ENCODE measurements at regions of chr12 and their contacts with region 1.

Region 1: GRCh38 chr12:49130151-49131050 is 794 bp downstream of the TUBA1B start:
- DNase-seq: peak; percentile 90
- H3K4me3 ChIP-seq: peak overlapping the region; percentile 73 to 80 (median 76)
- H3K27ac ChIP-seq: peak overlapping the region; percentile 94
- H3K4me1 ChIP-seq: peaks cover 24% of the 10 kb centered on the region
- H3K27me3 ChIP-seq: no peaks in the 10 kb centered on the region
- CTCF ChIP-seq: peak; percentile 86 to 94

Region 2: GRCh38 chr12:48758221-48758620 is 372.2 kb before region 1 on chr12:
- CTCF ChIA-PET with region 1: no interaction called
- dilution Hi-C with region 1: no loop called
- in situ Hi-C with region 1: no loop called
- intact Hi-C with region 1: no loop called
- DNase-seq: no peak
- H3K4me3 ChIP-seq: no peak overlapping the region
- H3K27ac ChIP-seq: no peak overlapping the region
- H3K4me1 ChIP-seq: no peaks in the 10 kb centered on the region
- H3K27me3 ChIP-seq: no peaks in the 10 kb centered on the region
- CTCF ChIP-seq: no peak

Region 3: GRCh38 chr12:48903982-48904411 is 226.4 kb before region 1 on chr12:
- CTCF ChIA-PET with region 1: no interaction called
- dilution Hi-C with region 1: no loop called
- in situ Hi-C with region 1: no loop called
- intact Hi-C with region 1: no loop called
- DNase-seq: peak; percentile 51
- H3K4me3 ChIP-seq: peak overlapping the region; percentile 34 to 43 (median 34)
- H3K27ac ChIP-seq: no peak overlapping the region
- H3K4me1 ChIP-seq: no peaks in the 10 kb centered on the region
- H3K27me3 ChIP-seq: no peaks in the 10 kb centered on the region
- CTCF ChIP-seq: peak; percentile 47 to 59

Region 4: DNA sequence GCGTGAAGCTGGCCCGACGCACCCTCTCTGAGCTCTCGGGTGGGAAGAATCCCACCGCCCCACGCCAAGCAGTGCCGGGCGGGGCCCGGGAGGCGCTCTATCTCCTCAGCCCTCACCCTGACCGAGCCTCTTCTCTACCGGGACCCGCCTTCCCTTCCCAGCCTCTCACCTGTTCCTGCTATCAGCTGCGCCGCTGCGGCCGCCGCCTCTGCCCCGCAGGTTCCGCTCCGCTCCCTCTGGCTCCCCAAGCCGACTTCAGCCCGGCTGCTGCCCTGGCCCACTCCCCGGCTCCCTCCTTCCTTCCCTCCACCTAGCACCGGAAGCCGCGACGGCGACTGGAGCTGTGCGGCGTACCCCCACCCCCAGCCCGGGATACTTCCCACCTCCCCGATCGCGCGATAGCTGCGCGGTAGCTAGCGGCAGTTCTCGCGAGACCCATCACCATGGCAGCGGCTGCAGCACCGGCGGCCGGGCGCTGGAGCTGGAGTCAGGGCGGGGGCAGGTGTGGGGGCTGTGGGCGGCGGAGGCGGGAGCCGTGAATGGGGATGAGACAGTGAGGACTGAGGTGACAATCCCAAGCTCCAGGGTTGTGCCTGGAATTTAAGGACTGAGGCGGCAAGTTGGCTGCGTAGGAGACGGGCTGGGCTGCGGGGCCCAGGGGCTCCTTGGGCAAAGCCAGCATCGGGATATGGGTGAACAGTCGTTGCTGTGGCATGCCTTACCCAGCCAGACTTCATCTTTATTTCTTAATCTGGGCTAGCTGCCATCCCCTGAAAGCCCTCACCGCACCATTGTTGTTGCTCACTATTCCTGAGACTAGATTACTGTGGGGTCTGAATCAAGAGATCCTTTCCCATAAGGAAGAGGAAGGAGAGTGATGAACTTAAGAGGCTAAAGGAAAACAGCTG is 173.0 kb before region 1 on chr12 and contains the start of gene ARF3:
- CTCF ChIA-PET with region 1: interaction called, 3 read pairs
- dilution Hi-C with region 1: no loop called
- in situ Hi-C with region 1: no loop called
- intact Hi-C with region 1: loop called (anchors 5 kb)
- DNase-seq: peak; percentile 88
- H3K4me3 ChIP-seq: peak within 1 kb of the TSS; percentile 82 to 97 (median 96)
- H3K27ac ChIP-seq: peak within 1 kb of the TSS; percentile 78
- H3K4me1 ChIP-seq: peaks cover 28% of the 10 kb centered on the region
- H3K27me3 ChIP-seq: no peaks in the 10 kb centered on the region
- CTCF ChIP-seq: no peak
- total RNA-seq, gene ARF3: 87.9 to 201 TPM

Region 5: DNA sequence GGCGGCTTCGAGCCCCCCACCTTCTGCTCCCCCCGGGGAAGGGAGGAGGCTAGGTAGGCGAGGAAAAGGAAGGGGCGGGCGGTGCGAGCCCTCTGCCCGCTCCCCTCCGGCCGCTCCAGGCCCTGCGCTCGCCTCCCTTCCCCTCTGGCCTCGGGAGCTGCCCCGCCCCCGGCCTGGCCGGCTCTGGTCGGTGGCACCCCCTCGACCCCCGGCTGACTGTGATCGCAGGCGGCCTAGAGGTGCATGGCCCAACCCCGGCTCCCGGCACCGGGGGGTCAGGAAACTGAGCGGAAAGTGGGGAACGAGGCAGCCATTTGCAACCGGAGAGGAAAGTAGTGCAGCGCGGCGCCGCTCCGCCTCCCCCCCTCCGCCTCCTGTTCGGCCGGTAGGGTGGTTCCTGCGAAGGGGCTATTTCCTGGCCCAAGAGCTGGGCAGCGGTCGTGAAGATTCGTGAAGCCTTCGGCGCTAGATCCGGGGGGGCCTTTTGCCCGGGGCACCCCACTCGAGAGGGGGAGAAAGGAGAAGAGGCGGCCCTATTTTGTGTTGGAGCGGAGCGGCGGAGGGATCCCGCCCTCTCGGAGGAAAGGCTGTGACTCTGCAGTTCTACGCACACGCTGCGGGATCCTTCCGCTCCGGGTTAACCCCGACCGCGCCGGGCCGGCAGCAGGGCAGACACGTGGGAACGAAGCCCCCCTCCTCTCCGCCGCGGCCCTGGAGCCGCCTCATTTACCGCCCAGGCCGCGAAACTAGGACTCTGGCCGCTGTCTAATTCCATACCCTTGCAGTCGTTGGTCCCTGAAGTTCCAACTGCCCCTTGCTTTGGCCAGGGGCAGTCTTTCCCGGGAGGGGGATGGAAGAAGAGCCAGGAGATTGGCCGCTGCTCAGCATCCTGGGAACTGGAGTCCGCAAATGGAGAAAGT is 69.9 kb before region 1 on chr12 and contains the start of gene KMT2D:
- CTCF ChIA-PET with region 1: no interaction called
- dilution Hi-C with region 1: loop called (anchors 5 kb)
- in situ Hi-C with region 1: loop called in 1 of 2 experiments (anchors 5 kb)
- intact Hi-C with region 1: loop called (anchors 2 kb)
- DNase-seq: peak; percentile 93
- H3K4me3 ChIP-seq: peak within 1 kb of the TSS; percentile 87 to 93 (median 89)
- H3K27ac ChIP-seq: peak within 1 kb of the TSS; percentile 82
- H3K4me1 ChIP-seq: peaks cover 24% of the 10 kb centered on the region
- H3K27me3 ChIP-seq: no peaks in the 10 kb centered on the region
- CTCF ChIP-seq: peak in 1 of 2 donors; percentile 30
- total RNA-seq, gene KMT2D: 30.7 to 78.0 TPM

Region 6: GRCh38 chr12:49088190-49088931 is 42.0 kb before region 1 on chr12:
- CTCF ChIA-PET with region 1: interaction called, 3 read pairs
- dilution Hi-C with region 1: no loop called
- in situ Hi-C with region 1: no loop called
- intact Hi-C with region 1: loop called (anchors 2 kb)
- DNase-seq: peak; percentile 90
- H3K4me3 ChIP-seq: no peak overlapping the region
- H3K27ac ChIP-seq: no peak overlapping the region
- H3K4me1 ChIP-seq: peaks cover 26% of the 10 kb centered on the region
- H3K27me3 ChIP-seq: peaks cover 27% of the 10 kb centered on the region
- CTCF ChIP-seq: peak; percentile 88 to 90

Region 7: GRCh38 chr12:49188914-49189367 is 58.5 kb after region 1 on chr12 and contains the start of gene TUBA1A:
- CTCF ChIA-PET with region 1: interaction called, 5 read pairs
- dilution Hi-C with region 1: no loop called
- in situ Hi-C with region 1: no loop called
- intact Hi-C with region 1: loop called (anchors 2 kb)
- DNase-seq: peak; percentile 97
- H3K4me3 ChIP-seq: peak within 1 kb of the TSS; percentile 80 to 82 (median 81)
- H3K27ac ChIP-seq: peak within 1 kb of the TSS; percentile 90
- H3K4me1 ChIP-seq: peaks cover 16% of the 10 kb centered on the region
- H3K27me3 ChIP-seq: no peaks in the 10 kb centered on the region
- CTCF ChIP-seq: no peak
- total RNA-seq, gene TUBA1A: 194 to 540 TPM

Region 8: GRCh38 chr12:49232940-49233841 is 102.8 kb after region 1 on chr12:
- CTCF ChIA-PET with region 1: no interaction called
- dilution Hi-C with region 1: no loop called
- in situ Hi-C with region 1: no loop called
- intact Hi-C with region 1: loop called (anchors 1 kb)
- DNase-seq: no peak
- H3K4me3 ChIP-seq: no peak overlapping the region
- H3K27ac ChIP-seq: no peak overlapping the region
- H3K4me1 ChIP-seq: no peaks in the 10 kb centered on the region
- H3K27me3 ChIP-seq: no peaks in the 10 kb centered on the region
- CTCF ChIP-seq: no peak

Region 9: GRCh38 chr12:49347384-49348237 is 217.2 kb after region 1 on chr12:
- CTCF ChIA-PET with region 1: no interaction called
- dilution Hi-C with region 1: no loop called
- in situ Hi-C with region 1: no loop called
- intact Hi-C with region 1: loop called (anchors 5 kb)
- DNase-seq: no peak
- H3K4me3 ChIP-seq: peak overlapping the region in 1 of 3 experiments; percentile 11
- H3K27ac ChIP-seq: no peak overlapping the region
- H3K4me1 ChIP-seq: peaks cover 30% of the 10 kb centered on the region
- H3K27me3 ChIP-seq: peaks cover 24% of the 10 kb centered on the region
- CTCF ChIP-seq: peak; percentile 80 to 85